Aorta (tissue), 5 donors: ENCODE measurements at regions of chr6 and their contacts with region 1.

Region 1: GRCh38 chr6:15504581-15505350 is 158.1 kb downstream of the DTNBP1 start:
- DNase-seq: peak; percentile 71 to 80
- ATAC-seq: peak; percentile 74
- H3K4me3 ChIP-seq: no peak overlapping the region
- H3K27ac ChIP-seq: no peak overlapping the region
- H3K4me1 ChIP-seq: no peaks in the 10 kb centered on the region
- H3K27me3 ChIP-seq: no peaks in the 10 kb centered on the region

Region 2: GRCh38 chr6:15389765-15390723 is 114.7 kb before region 1 on chr6:
- intact Hi-C with region 1: no loop called
- DNase-seq: no peak
- ATAC-seq: peak; percentile 41
- H3K4me3 ChIP-seq: no peak overlapping the region
- H3K27ac ChIP-seq: no peak overlapping the region
- H3K4me1 ChIP-seq: no peaks in the 10 kb centered on the region
- H3K27me3 ChIP-seq: no peaks in the 10 kb centered on the region

Region 3: GRCh38 chr6:15615802-15616201 is 111.0 kb after region 1 on chr6:
- intact Hi-C with region 1: loop called (anchors 10 kb)
- DNase-seq: no peak
- ATAC-seq: no peak
- H3K4me3 ChIP-seq: no peak overlapping the region
- H3K27ac ChIP-seq: no peak overlapping the region
- H3K4me1 ChIP-seq: no peaks in the 10 kb centered on the region
- H3K27me3 ChIP-seq: no peaks in the 10 kb centered on the region

Region 4: GRCh38 chr6:15854826-15855710 is 350.3 kb after region 1 on chr6:
- intact Hi-C with region 1: no loop called
- DNase-seq: no peak
- ATAC-seq: no peak
- H3K4me3 ChIP-seq: no peak overlapping the region
- H3K27ac ChIP-seq: no peak overlapping the region
- H3K4me1 ChIP-seq: no peaks in the 10 kb centered on the region
- H3K27me3 ChIP-seq: no peaks in the 10 kb centered on the region